PC-9 (cell line): ENCODE measurements at regions of chr7 and their contacts with region 1.

Region 1: DNA sequence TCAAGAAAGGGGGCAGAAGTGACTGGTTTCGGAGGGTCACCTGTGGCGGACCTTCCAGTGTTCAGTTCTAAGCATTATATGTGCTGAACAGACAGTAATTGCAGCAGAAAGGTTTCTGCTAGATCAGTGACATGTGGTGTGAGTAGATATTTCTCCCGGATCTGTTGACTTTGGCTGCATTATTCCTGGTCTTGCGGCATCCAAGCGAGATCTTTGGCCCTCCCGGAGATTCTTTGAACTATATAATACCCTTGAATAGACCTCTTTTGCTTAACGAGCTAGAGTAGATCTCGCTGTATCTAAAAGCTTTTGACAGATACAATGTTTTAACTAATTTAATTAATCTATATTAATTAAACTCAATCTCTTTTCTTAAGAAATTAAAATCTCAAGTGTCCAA is 99.8 kb downstream of the PTN start:
- DNase-seq: no peak
- H3K4me3 ChIP-seq: no peak overlapping the region
- H3K27ac ChIP-seq: no peak overlapping the region
- H3K4me1 ChIP-seq: no peaks in the 10 kb centered on the region
- H3K27me3 ChIP-seq: no peaks in the 10 kb centered on the region
- CTCF ChIP-seq: no peak

Region 2: GRCh38 chr7:137231950-137232349 is 11.8 kb before region 1 on chr7:
- CTCF ChIA-PET with region 1: no interaction called
- POLR2A ChIA-PET with region 1: no interaction called
- intact Hi-C with region 1: no loop called
- DNase-seq: no peak
- H3K4me3 ChIP-seq: no peak overlapping the region
- H3K27ac ChIP-seq: no peak overlapping the region
- H3K4me1 ChIP-seq: no peaks in the 10 kb centered on the region
- H3K27me3 ChIP-seq: no peaks in the 10 kb centered on the region
- CTCF ChIP-seq: no peak

Region 3: GRCh38 chr7:137254766-137255165 is 11.0 kb after region 1 on chr7:
- CTCF ChIA-PET with region 1: interaction called, 10 read pairs
- POLR2A ChIA-PET with region 1: no interaction called
- intact Hi-C with region 1: no loop called
- DNase-seq: no peak
- H3K4me3 ChIP-seq: no peak overlapping the region
- H3K27ac ChIP-seq: no peak overlapping the region
- H3K4me1 ChIP-seq: no peaks in the 10 kb centered on the region
- H3K27me3 ChIP-seq: no peaks in the 10 kb centered on the region
- CTCF ChIP-seq: no peak